CD8-positive, alpha-beta T cell (primary cell): ENCODE measurements at regions of chr13 and their contacts with region 1.

Region 1: GRCh38 chr13:63567031-63567430 is 2151.4 kb upstream of the PCDH20 start:
- DNase-seq: no peak
- ATAC-seq: no peak
- H3K4me3 ChIP-seq: no peak overlapping the region
- H3K4me3 Mint-ChIP-seq: no peak overlapping the region
- H3K27ac ChIP-seq: no peak overlapping the region
- H3K27ac Mint-ChIP-seq: no peak overlapping the region
- H3K4me1 ChIP-seq: no peaks in the 10 kb centered on the region
- H3K4me1 Mint-ChIP-seq: no peaks in the 10 kb centered on the region
- H3K27me3 ChIP-seq: no peaks in the 10 kb centered on the region
- H3K27me3 Mint-ChIP-seq: no peaks in the 10 kb centered on the region
- CTCF ChIP-seq: no peak

Region 2: DNA sequence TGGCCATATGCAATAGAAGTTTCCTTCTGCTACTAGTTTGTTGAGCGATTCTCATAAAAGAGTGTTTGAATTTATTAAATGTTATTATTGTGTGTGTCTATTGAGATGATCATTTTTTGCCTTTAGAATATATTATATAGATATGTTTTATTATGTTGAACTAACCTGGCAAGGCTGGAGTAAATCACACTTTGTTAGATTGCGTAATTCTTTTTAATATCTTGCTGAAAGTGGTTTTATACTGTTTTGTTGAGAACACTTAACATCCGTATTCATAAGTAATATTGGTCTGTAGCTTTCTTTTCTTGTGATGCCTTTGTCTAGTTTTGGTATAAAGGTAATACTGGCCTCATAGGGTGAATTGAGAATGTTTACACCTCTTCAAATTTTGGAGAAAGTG is 1577.1 kb before region 1 on chr13:
- CTCF ChIA-PET with region 1: no interaction called
- POLR2A ChIA-PET with region 1: no interaction called
- intact Hi-C with region 1: loop called in 1 of 2 experiments (anchors 5 kb)
- DNase-seq: no peak
- ATAC-seq: no peak
- H3K4me3 ChIP-seq: no peak overlapping the region
- H3K4me3 Mint-ChIP-seq: no peak overlapping the region
- H3K27ac ChIP-seq: no peak overlapping the region
- H3K27ac Mint-ChIP-seq: no peak overlapping the region
- H3K4me1 ChIP-seq: no peaks in the 10 kb centered on the region
- H3K4me1 Mint-ChIP-seq: no peaks in the 10 kb centered on the region
- H3K27me3 ChIP-seq: no peaks in the 10 kb centered on the region
- H3K27me3 Mint-ChIP-seq: no peaks in the 10 kb centered on the region
- CTCF ChIP-seq: no peak